ENCODE measurements at regions of chrX and their contacts with region 1.

Region 1: GRCh38 chrX:12819231-12819630 is 28.0 kb downstream of the PRPS2 start:
- DNase-seq: no peak
- H3K4me3 ChIP-seq: no peak overlapping the region
- H3K27ac ChIP-seq: no peak overlapping the region
- H3K4me1 ChIP-seq: no peaks in the 10 kb centered on the region
- H3K27me3 ChIP-seq: no peaks in the 10 kb centered on the region
- CTCF ChIP-seq: no peak
- POLR2A ChIP-seq: no peak

Region 2: DNA sequence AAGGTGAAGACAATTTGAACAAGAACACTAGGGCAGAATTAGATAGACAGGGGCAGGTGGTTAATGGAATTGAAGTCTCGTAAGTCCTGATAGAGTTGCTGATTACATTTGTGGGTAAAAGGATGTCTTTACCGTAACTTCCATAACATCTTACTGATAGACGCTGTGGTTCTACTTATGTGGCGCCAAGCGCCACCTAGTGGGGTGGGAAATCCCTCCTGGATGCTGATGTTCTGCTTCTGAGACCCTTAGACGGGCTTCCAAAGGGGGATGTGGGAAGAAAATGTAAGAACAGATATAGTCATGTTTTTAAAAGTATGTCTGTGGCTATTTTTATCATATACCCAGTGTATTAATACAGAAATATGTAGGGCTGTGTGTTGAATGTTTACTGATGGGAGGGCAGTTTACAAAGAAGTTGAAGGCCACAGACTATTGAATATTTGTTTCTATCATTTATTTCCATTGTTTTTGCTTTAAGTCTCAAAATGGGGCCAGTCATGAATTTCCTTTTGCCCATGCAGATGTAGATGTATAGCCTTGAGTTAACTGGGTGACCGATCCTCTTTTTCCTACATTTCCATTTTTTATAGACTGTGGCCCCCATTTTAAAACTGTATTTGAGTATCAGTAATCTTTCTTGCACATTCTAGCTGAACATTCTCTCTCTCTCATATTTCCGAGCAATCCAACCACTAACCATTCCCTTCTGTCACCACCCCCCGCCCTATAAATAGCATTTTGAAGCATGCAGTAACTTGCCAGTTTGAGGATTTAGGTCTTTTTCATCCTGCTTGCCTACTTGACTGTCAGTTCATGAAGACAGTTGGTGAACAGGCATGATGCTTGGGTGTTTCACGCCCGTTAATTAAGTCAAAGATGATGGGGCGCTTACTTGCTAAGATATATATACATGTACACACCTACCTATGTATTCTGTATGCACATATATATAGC is 75.1 kb after region 1 on chrX:
- intact Hi-C with region 1: loop called (anchors 5 kb)
- DNase-seq: peak; percentile 12
- H3K4me3 ChIP-seq: no peak overlapping the region
- H3K27ac ChIP-seq: no peak overlapping the region
- H3K4me1 ChIP-seq: no peaks in the 10 kb centered on the region
- H3K27me3 ChIP-seq: no peaks in the 10 kb centered on the region
- CTCF ChIP-seq: peak; percentile 18 to 58 (median 46)
- POLR2A ChIP-seq: no peak

Region 3: DNA sequence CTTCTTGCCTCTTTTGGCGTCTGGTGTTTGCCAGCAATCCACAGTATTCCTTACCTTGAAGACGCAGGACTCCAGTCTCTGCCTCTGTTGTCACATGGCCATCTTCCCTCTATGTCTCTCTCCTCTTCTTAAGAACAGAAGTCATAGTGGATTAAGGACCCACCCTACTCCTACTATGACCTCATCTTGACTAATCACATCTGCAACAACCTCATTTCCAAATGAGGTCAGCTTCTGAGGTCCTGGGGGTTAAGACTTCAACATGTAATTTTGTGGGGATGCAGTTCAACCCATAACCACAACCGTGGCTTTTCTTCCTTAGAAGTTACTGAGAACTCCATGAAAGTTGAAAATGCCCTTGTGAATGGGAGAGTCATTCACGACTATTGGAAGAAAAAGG is 110.5 kb after region 1 on chrX:
- intact Hi-C with region 1: no loop called
- DNase-seq: no peak
- H3K4me3 ChIP-seq: no peak overlapping the region
- H3K27ac ChIP-seq: no peak overlapping the region
- H3K4me1 ChIP-seq: no peaks in the 10 kb centered on the region
- H3K27me3 ChIP-seq: no peaks in the 10 kb centered on the region
- CTCF ChIP-seq: no peak
- POLR2A ChIP-seq: no peak

Measured in prostate gland (tissue), 2 donors.